Activated CD8-positive, alpha-beta T cell treated with anti-CD3 and anti-CD28 coated beads, Interleukin-2, amount 10 ng/mL, durations not matched to agents 7 days and 5 days (primary cell): ENCODE measurements at regions of chr1 and their contacts with region 1.

Region 1: GRCh38 chr1:154558575-154559465 is at the start of gene UBE2Q1:
- DNase-seq: peak; percentile 100
- ATAC-seq: peak; percentile 95
- H3K4me3 Mint-ChIP-seq: peak within 1 kb of the TSS; percentile 90
- H3K27ac Mint-ChIP-seq: peak within 1 kb of the TSS; percentile 93
- H3K4me1 Mint-ChIP-seq: peaks cover 37% of the 10 kb centered on the region
- H3K27me3 Mint-ChIP-seq: no peaks in the 10 kb centered on the region
- total RNA-seq, gene UBE2Q1: 93.6 to 103 TPM

Region 2: GRCh38 chr1:154589780-154590179 is 31.0 kb after region 1 on chr1:
- CTCF ChIA-PET with region 1: interaction called, 10 read pairs
- POLR2A ChIA-PET with region 1: no interaction called
- DNase-seq: no peak
- ATAC-seq: no peak
- H3K4me3 Mint-ChIP-seq: no peak overlapping the region
- H3K27ac Mint-ChIP-seq: no peak overlapping the region
- H3K4me1 Mint-ChIP-seq: no peaks in the 10 kb centered on the region
- H3K27me3 Mint-ChIP-seq: no peaks in the 10 kb centered on the region

Region 3: GRCh38 chr1:154747740-154748404 is 189.1 kb after region 1 on chr1:
- CTCF ChIA-PET with region 1: interaction called, 15 read pairs
- POLR2A ChIA-PET with region 1: no interaction called
- DNase-seq: peak; percentile 74
- ATAC-seq: peak; percentile 79
- H3K4me3 Mint-ChIP-seq: peak overlapping the region; percentile 69
- H3K27ac Mint-ChIP-seq: peak overlapping the region; percentile 90
- H3K4me1 Mint-ChIP-seq: peaks cover 74% of the 10 kb centered on the region
- H3K27me3 Mint-ChIP-seq: peaks cover 18% of the 10 kb centered on the region

Region 4: GRCh38 chr1:154873321-154873950 is 314.6 kb after region 1 on chr1:
- CTCF ChIA-PET with region 1: interaction called, 24 read pairs
- POLR2A ChIA-PET with region 1: no interaction called
- DNase-seq: no peak
- ATAC-seq: no peak
- H3K4me3 Mint-ChIP-seq: no peak overlapping the region
- H3K27ac Mint-ChIP-seq: no peak overlapping the region
- H3K4me1 Mint-ChIP-seq: peaks cover 15% of the 10 kb centered on the region
- H3K27me3 Mint-ChIP-seq: peaks cover 22% of the 10 kb centered on the region

Region 5: DNA sequence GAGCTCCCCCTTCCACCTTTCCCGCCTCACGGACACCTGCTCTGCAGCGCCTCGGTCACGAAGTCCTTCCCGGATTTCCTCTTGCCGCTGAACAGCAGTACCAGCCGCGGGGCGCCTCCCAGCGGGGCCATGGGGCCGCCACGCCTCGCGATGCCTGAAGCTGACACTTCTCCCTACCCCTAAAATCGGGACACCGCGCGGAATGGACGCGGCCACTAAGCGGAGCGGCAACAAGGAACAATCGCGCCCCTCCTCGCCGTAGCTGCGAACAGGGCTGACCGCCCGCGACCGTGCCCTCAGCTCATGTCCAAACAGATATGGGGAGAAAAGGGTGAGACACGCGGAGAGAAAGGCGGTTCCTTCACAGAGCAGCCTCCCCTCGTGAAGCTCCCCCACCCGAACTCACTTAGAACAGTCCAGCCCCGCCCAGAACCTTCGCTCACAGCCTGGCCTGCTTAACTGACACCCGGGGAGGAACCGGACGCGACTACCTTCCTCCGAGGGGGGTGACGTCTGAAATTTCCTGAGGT is 377.8 kb after region 1 on chr1 and contains the start of gene PMVK:
- CTCF ChIA-PET with region 1: interaction called, 23 read pairs
- POLR2A ChIA-PET with region 1: interaction called, 4 read pairs
- DNase-seq: peak; percentile 98
- ATAC-seq: peak; percentile 86
- H3K4me3 Mint-ChIP-seq: peak within 1 kb of the TSS; percentile 95
- H3K27ac Mint-ChIP-seq: peak within 1 kb of the TSS; percentile 96
- H3K4me1 Mint-ChIP-seq: peaks cover 56% of the 10 kb centered on the region
- H3K27me3 Mint-ChIP-seq: no peaks in the 10 kb centered on the region
- total RNA-seq, gene PMVK: 40.9 to 43.8 TPM